ENCODE measurements at regions of chr15 and their contacts with region 1.

Region 1: GRCh38 chr15:74235962-74236361 is at the start of gene CCDC33:
- DNase-seq: no peak
- H3K4me3 ChIP-seq: no peak within 1 kb of the TSS
- CTCF ChIP-seq: no peak

Region 2: GRCh38 chr15:74179948-74180880 is 55.7 kb before region 1 on chr15:
- in situ Hi-C with region 1: loop called (anchors 5 kb)
- DNase-seq: no peak
- H3K4me3 ChIP-seq: no peak overlapping the region
- CTCF ChIP-seq: no peak